Ascending aorta (tissue), 2 donors: ENCODE measurements at regions of chrX and their contacts with region 1.

Region 1: GRCh38 chrX:15737960-15738902 is at the start of gene CA5B:
- DNase-seq: peak; percentile 85 to 98
- H3K4me3 ChIP-seq: peak within 1 kb of the TSS; percentile 59 to 80
- H3K27ac ChIP-seq: peak within 1 kb of the TSS; percentile 66 to 75
- H3K4me1 ChIP-seq: peaks cover 0 to 3% of the 10 kb centered on the region in 2 donors
- H3K27me3 ChIP-seq: no peaks in the 10 kb centered on the region
- CTCF ChIP-seq: no peak
- total RNA-seq, gene CA5B: 13.5 TPM

Region 2: DNA sequence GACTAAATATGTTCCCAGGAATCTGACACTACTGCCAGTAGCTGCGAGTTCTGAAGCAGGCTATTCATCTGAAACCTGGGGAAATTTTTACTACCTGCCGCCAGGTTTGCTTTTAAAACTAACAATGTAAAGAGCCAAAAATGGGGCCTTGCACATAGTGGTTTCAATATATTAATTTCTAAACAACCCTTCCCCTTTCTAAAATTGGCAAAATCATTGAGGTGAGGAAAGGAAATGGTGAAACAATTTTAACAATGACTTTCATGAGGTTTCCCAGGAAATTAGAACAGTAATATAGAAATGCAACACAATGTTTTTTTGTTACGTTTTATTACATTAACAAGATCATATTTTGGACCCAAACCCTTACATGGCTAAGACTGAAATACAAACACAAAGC is 886.7 kb before region 1 on chrX:
- intact Hi-C with region 1: no loop called
- DNase-seq: no peak
- H3K4me3 ChIP-seq: no peak overlapping the region
- H3K27ac ChIP-seq: no peak overlapping the region
- H3K4me1 ChIP-seq: no peaks in the 10 kb centered on the region
- H3K27me3 ChIP-seq: no peaks in the 10 kb centered on the region
- CTCF ChIP-seq: no peak

Region 3: DNA sequence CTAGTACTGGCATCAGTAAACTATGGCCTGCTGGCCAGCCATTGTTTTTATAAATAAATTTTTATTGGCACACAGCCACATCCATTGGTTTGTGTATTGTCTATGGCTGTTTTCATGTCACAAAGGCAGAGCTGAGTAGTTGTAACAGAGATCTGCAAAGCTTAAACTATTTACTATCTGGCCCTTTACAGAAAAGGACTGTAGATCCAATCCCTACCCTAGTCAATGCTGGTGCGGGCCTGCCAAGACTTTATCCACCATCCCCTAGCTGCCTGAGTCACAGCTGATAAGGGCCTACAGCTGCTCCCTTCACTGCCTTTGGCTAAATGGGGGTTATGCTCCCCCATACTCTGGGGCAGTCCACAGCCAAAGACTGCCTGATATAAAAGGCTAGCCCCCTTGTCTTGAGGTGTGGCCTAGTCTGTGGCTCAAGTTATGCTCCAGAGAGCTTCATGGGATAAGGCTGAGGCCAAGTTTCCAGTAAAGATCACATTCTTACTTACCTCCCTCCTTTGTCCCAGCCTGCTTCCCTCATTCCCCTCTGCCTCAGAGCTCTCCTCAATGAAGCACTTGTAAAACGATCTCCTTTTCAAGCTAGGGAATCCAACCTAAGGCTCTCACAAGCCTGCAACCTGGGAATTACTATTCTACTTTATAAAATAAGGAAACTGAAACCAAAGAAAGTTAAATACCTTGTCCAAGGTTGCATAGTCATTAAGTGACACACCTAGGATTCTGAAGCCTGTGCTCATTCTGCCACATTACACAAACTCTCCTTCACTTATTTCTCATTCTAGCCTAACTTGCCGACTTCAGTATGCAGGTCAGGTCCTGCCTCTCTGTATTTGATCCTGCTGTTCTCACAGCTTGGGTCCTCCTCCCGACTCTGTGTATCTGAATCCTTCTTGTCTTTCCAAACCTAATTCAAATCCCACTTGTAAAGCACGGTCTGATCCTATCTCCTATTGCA is 158.2 kb before region 1 on chrX:
- intact Hi-C with region 1: no loop called
- DNase-seq: no peak
- H3K4me3 ChIP-seq: no peak overlapping the region
- H3K27ac ChIP-seq: peak overlapping the region in 1 of 2 donors; percentile 38
- H3K4me1 ChIP-seq: no peaks in the 10 kb centered on the region
- H3K27me3 ChIP-seq: no peaks in the 10 kb centered on the region
- CTCF ChIP-seq: no peak

Region 4: GRCh38 chrX:15749642-15750610 is 11.7 kb after region 1 on chrX:
- intact Hi-C with region 1: loop called (anchors 1 kb)
- DNase-seq: peak in 1 of 2 donors; percentile 72
- H3K4me3 ChIP-seq: peak overlapping the region in 1 of 2 donors; percentile 13
- H3K27ac ChIP-seq: peak overlapping the region; percentile 83 to 89
- H3K4me1 ChIP-seq: peaks cover 3 to 26% of the 10 kb centered on the region in 2 donors
- H3K27me3 ChIP-seq: no peaks in the 10 kb centered on the region
- CTCF ChIP-seq: no peak

Region 5: GRCh38 chrX:16719334-16720084 is 981.3 kb after region 1 on chrX and contains the start of gene SYAP1:
- intact Hi-C with region 1: loop called (anchors 5 kb)
- DNase-seq: peak; percentile 94 to 99
- H3K4me3 ChIP-seq: peak within 1 kb of the TSS; percentile 86 to 93
- H3K27ac ChIP-seq: peak within 1 kb of the TSS; percentile 93 to 98
- H3K4me1 ChIP-seq: peaks cover 0 to 16% of the 10 kb centered on the region in 2 donors
- H3K27me3 ChIP-seq: no peaks in the 10 kb centered on the region
- CTCF ChIP-seq: no peak
- total RNA-seq, gene SYAP1: 14.2 TPM